Activated CD4-positive, alpha-beta memory T cell treated with anti-CD3 and anti-CD28 coated beads for 36 hours (primary cell): ENCODE measurements at regions of chr13 and their contacts with region 1.

Region 1: DNA sequence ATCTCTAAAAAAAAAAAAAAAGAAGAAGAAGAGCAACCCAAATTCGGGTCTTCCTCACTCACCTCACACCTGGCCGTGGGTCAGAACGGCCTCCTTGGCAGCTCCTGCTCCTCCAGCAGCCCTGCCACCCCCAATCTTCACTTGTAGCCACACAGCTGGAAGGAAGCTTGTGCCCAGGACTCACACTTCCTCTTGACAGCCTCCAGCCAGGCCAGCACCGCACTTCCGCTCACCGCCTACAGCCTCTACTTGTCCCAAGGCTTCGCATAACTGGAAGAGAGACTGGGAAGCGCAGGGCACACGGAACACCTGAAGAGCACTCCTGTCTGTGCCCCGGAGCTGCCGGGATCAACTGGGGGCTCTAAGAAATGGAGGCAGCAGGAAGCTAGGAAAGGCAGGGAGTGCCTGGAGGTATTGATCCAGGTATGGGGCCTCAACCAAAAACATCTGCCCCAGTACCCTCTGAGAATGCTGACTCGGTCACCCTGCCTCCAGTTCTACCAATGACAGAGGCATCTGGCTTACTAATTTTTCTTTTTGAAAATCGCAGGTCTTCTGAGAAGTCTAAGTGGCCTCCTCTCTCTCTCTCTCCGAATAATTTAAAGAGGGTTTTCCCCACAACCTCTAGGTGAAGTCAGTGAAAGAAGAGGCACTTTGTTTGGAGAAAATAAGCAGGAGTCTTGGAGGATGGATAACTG is 31.1 kb upstream of the ATP12A start:
- DNase-seq: peak; percentile 51
- H3K4me3 Mint-ChIP-seq: no peak overlapping the region
- H3K27ac Mint-ChIP-seq: peak overlapping the region; percentile 73
- H3K4me1 Mint-ChIP-seq: peaks cover 10% of the 10 kb centered on the region
- H3K27me3 Mint-ChIP-seq: peaks cover 7% of the 10 kb centered on the region

Region 2: DNA sequence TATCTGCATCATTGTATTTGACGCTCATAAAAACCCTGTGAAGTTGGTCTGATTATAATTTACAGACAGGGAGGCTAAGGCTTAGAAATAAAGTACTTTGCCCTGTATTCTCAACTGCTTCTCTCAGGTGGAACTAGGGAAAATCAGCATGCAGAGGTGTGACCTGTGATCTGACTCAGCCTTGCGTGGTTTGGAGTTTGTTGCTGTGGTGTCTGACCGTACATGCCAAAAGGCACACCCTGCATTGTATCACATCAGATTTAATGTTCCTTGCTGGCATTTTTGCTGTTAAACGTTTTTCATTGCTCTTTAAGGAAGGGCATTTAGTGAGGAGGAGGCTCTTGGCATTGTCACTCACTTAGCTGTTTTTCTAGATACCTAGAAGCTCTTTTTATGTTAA is 693.0 kb before region 1 on chr13:
- CTCF ChIA-PET with region 1: no interaction called
- POLR2A ChIA-PET with region 1: no interaction called
- intact Hi-C with region 1: no loop called
- DNase-seq: peak; percentile 63
- H3K4me3 Mint-ChIP-seq: no peak overlapping the region
- H3K27ac Mint-ChIP-seq: no peak overlapping the region
- H3K4me1 Mint-ChIP-seq: peaks cover 15% of the 10 kb centered on the region
- H3K27me3 Mint-ChIP-seq: peaks cover 4% of the 10 kb centered on the region

Region 3: DNA sequence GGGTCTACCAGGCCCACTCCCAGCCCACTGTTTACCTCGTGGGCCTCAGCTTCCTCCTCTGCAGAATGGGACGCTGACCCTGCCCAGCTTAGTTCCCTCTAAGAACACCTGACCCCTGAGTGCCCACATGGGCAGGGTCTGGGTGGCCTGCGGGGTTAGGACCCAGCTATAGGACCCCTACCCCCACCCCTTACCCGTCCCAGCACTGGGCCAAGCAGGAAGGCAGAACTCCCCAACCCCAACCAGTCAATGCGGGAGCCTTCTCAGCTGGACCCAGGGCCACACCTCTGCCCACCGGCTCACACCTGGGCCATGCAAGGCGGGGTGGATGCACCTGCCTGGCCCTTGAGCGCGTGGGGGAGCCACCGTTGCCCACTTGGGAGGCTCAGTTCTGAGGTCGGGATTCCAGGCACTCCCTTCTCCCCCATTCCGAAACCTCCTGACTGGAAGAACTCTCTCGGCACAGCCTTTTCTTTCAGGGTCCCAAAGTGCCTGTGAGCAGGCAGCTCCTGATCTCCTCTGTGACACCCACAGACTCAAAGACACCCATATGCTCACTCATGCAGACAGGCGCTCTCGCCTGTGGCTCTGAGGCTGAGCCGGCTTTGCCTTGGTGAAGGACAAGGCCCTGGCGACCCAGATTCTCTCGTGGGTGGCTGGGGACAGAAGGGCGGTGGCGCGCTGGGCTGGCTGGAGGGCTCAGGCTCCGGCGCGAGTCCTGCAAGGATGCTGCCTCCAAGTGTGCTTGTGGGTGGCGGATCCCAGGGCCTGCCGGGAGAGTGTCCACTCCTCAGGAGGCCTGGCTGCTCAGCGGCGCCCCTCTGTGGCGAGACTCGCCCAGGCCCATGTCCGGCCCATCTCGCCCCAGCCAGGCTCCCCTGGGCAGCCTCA is 108.7 kb before region 1 on chr13:
- CTCF ChIA-PET with region 1: no interaction called
- POLR2A ChIA-PET with region 1: no interaction called
- intact Hi-C with region 1: no loop called
- DNase-seq: peak; percentile 22
- H3K4me3 Mint-ChIP-seq: no peak overlapping the region
- H3K27ac Mint-ChIP-seq: no peak overlapping the region
- H3K4me1 Mint-ChIP-seq: peaks cover 8% of the 10 kb centered on the region
- H3K27me3 Mint-ChIP-seq: peaks cover 33% of the 10 kb centered on the region

Region 4: GRCh38 chr13:24617256-24618013 is 31.7 kb before region 1 on chr13:
- CTCF ChIA-PET with region 1: no interaction called
- POLR2A ChIA-PET with region 1: no interaction called
- intact Hi-C with region 1: no loop called
- DNase-seq: no peak
- H3K4me3 Mint-ChIP-seq: no peak overlapping the region
- H3K27ac Mint-ChIP-seq: peak overlapping the region; percentile 81
- H3K4me1 Mint-ChIP-seq: peaks cover 28% of the 10 kb centered on the region
- H3K27me3 Mint-ChIP-seq: no peaks in the 10 kb centered on the region

Region 5: DNA sequence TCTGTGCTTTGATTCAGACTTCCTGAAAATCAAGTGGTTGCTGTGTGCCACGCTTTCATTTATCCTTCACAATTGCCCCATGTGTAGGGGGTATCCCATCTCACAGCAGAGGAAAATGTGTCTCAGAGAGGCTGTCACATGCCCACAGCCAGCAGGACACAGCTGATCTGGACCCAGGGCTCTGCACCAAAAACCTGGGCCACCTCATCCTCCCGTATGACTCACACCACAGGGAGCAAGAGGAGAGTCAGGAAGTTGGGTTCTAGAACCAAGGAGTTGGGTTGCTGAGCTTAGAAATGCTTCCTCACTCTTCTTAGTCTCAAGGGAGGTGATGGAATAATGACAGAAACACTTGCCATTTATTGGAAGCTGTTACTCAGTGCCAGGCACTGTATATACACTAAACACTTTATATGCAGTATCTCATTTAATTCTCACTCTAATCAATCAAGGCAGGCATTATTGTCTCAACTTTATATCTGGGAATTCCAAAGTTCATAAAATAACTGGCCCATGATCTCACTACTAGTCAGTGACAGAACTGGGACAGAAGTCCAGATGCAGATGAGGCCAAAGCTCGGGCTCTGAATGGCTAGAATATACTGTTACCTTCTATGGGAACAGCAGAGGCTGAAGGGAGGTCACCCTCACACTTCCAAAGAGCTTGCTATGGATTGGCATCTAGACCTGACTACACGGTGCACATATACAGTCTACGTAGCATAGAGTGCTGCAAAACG is 16.6 kb before region 1 on chr13:
- CTCF ChIA-PET with region 1: no interaction called
- POLR2A ChIA-PET with region 1: no interaction called
- intact Hi-C with region 1: loop called (anchors 2 kb)
- DNase-seq: no peak
- H3K4me3 Mint-ChIP-seq: no peak overlapping the region
- H3K27ac Mint-ChIP-seq: no peak overlapping the region
- H3K4me1 Mint-ChIP-seq: peaks cover 13% of the 10 kb centered on the region
- H3K27me3 Mint-ChIP-seq: no peaks in the 10 kb centered on the region

Region 6: GRCh38 chr13:26011996-26012821 is 1363.1 kb after region 1 on chr13:
- CTCF ChIA-PET with region 1: no interaction called
- POLR2A ChIA-PET with region 1: no interaction called
- intact Hi-C with region 1: no loop called
- DNase-seq: peak; percentile 63
- H3K4me3 Mint-ChIP-seq: peak overlapping the region; percentile 64
- H3K27ac Mint-ChIP-seq: no peak overlapping the region
- H3K4me1 Mint-ChIP-seq: peaks cover 17% of the 10 kb centered on the region
- H3K27me3 Mint-ChIP-seq: no peaks in the 10 kb centered on the region